ENCODE measurements at regions of chr22 and their contacts with region 1.

Region 1: DNA sequence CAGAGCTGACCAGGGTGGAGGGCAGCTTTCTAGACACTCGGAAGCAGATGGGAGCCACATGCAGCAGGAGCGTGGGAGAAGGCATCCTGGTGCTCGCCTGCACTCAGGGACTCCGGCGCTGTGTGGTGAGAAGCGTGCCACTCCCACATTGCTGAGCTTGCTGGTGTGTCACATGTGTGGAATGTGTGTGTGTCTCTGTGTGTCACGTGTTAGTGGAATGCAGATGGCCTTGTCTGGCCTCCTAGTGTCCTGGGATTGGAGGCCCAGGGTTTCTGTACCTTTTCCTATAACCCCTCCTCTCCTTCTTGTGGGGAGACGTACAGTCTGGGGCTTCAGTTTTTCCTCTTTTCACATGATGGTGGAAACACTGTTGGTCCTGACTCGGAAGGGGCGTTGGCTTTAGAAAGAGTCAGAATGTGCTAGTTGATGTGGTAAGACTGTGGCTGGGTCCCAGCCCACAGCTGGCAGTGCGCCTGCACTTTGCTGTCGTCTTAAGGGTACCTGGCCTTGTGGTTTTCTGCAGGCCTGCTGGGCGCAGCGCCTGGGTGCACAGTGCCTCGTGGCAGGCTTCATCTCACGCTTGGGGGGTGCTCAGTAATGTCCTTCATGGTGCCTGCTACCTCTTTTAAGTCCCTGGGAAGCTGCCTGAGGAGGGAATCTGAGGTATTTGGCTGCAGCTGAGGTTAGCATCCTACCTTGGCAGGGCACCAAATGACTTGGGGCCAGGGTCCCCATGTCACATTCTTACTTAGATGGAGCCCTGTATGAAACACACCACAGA is 61.8 kb downstream of the MED15 start:
- DNase-seq: peak; percentile 73 to 96 (median 88)
- ATAC-seq: peak; percentile 62
- H3K4me3 ChIP-seq: peak overlapping the region; percentile 12 to 30
- H3K4me3 Mint-ChIP-seq: peak overlapping the region; percentile 82
- H3K27ac ChIP-seq: peak overlapping the region; percentile 54 to 75
- H3K27ac Mint-ChIP-seq: peak overlapping the region; percentile 96
- H3K4me1 ChIP-seq: peaks cover 81% of the 10 kb centered on the region
- H3K4me1 Mint-ChIP-seq: peaks cover 80% of the 10 kb centered on the region
- H3K27me3 ChIP-seq: no peaks in the 10 kb centered on the region
- H3K27me3 Mint-ChIP-seq: no peaks in the 10 kb centered on the region
- CTCF ChIP-seq: no peak

Region 2: GRCh38 chr22:20319745-20320658 is 249.2 kb before region 1 on chr22 and contains the start of gene DGCR6L:
- CTCF ChIA-PET with region 1: no interaction called
- POLR2A ChIA-PET with region 1: interaction called, 3 read pairs
- intact Hi-C with region 1: loop called in 1 of 2 experiments (anchors 5 kb)
- DNase-seq: peak; percentile 91 to 99 (median 97)
- ATAC-seq: peak; percentile 76
- H3K4me3 ChIP-seq: peak within 1 kb of the TSS; percentile 88 to 97
- H3K4me3 Mint-ChIP-seq: peak within 1 kb of the TSS; percentile 90
- H3K27ac ChIP-seq: peak within 1 kb of the TSS; percentile 69 to 70
- H3K27ac Mint-ChIP-seq: peak within 1 kb of the TSS; percentile 89
- H3K4me1 ChIP-seq: peaks cover 51% of the 10 kb centered on the region
- H3K4me1 Mint-ChIP-seq: peaks cover 62% of the 10 kb centered on the region
- H3K27me3 ChIP-seq: no peaks in the 10 kb centered on the region
- H3K27me3 Mint-ChIP-seq: no peaks in the 10 kb centered on the region
- CTCF ChIP-seq: no peak
- total RNA-seq, gene DGCR6L: 29.8 to 32.9 TPM

Region 3: GRCh38 chr22:20456064-20456721 is 113.0 kb before region 1 on chr22:
- CTCF ChIA-PET with region 1: interaction called, 10 read pairs
- POLR2A ChIA-PET with region 1: no interaction called
- intact Hi-C with region 1: loop called in 1 of 2 experiments (anchors 5 kb)
- DNase-seq: peak; percentile 48 to 90 (median 75)
- ATAC-seq: peak; percentile 100
- H3K4me3 ChIP-seq: no peak overlapping the region
- H3K4me3 Mint-ChIP-seq: no peak overlapping the region
- H3K27ac ChIP-seq: no peak overlapping the region
- H3K27ac Mint-ChIP-seq: peak overlapping the region; percentile 4
- H3K4me1 ChIP-seq: peaks cover 16% of the 10 kb centered on the region
- H3K4me1 Mint-ChIP-seq: peaks cover 34% of the 10 kb centered on the region
- H3K27me3 ChIP-seq: no peaks in the 10 kb centered on the region
- H3K27me3 Mint-ChIP-seq: no peaks in the 10 kb centered on the region
- CTCF ChIP-seq: peak; percentile 87

Region 4: DNA sequence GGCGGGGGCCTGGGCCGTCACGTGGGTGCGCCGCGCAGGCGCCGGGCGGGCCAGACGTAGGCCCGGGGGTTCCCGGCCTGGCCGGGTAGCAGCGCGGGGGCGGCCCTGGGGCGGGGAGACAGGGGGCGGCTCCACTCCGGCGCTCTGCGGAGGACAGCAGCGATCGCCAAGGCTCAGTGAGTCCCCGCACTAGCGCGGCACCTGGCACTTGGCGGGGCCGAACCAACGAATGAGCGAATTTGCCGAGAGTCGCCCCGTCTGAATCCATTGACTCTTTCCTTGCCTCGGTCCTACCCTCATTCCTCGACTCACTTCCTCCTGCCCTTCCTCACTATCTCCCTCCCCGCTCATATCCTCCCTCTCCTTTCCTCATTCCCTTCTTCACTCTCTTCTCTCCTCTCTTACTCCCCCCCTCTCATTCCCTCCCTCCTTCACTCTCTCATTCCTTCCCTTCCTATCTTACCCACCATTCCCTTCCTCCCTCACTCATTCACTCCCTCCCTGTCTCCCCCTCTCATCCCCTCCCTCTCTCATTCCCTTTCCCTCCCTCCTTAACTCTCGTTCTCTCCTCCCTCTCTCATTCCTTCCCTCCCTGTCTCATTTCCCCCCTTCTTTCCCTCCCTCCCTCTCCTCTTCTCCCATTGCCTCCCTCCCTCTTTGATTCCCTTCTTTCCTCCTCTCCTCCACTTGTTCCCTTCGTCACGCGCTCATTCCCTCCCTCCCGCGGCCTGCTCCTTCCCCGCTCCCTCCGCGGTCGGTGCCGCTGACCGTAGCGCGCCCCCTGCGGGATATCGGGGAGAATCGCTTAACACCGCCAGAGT is 73.1 kb before region 1 on chr22:
- CTCF ChIA-PET with region 1: interaction called, 4 read pairs
- POLR2A ChIA-PET with region 1: interaction called, 10 read pairs
- intact Hi-C with region 1: loop called in 1 of 2 experiments (anchors 1 kb)
- DNase-seq: peak; percentile 83 to 96 (median 91)
- ATAC-seq: peak; percentile 96
- H3K4me3 ChIP-seq: peak overlapping the region; percentile 75 to 83
- H3K4me3 Mint-ChIP-seq: peak overlapping the region; percentile 89
- H3K27ac ChIP-seq: peak overlapping the region; percentile 61 to 98
- H3K27ac Mint-ChIP-seq: peak overlapping the region; percentile 91
- H3K4me1 ChIP-seq: peaks cover 42% of the 10 kb centered on the region
- H3K4me1 Mint-ChIP-seq: peaks cover 41% of the 10 kb centered on the region
- H3K27me3 ChIP-seq: no peaks in the 10 kb centered on the region
- H3K27me3 Mint-ChIP-seq: no peaks in the 10 kb centered on the region
- CTCF ChIP-seq: peak; percentile 95

Region 5: GRCh38 chr22:20531315-20532201 is 37.6 kb before region 1 on chr22:
- CTCF ChIA-PET with region 1: interaction called, 24 read pairs
- POLR2A ChIA-PET with region 1: interaction called, 5 read pairs
- intact Hi-C with region 1: no loop called
- DNase-seq: peak in 1 of 9 experiments; percentile 8
- ATAC-seq: peak; percentile 34
- H3K4me3 ChIP-seq: no peak overlapping the region
- H3K4me3 Mint-ChIP-seq: peak overlapping the region; percentile 4
- H3K27ac ChIP-seq: peak overlapping the region in 1 of 2 experiments; percentile 46
- H3K27ac Mint-ChIP-seq: peak overlapping the region; percentile 90
- H3K4me1 ChIP-seq: peaks cover 49% of the 10 kb centered on the region
- H3K4me1 Mint-ChIP-seq: peaks cover 76% of the 10 kb centered on the region
- H3K27me3 ChIP-seq: no peaks in the 10 kb centered on the region
- H3K27me3 Mint-ChIP-seq: no peaks in the 10 kb centered on the region
- CTCF ChIP-seq: no peak

Region 6: DNA sequence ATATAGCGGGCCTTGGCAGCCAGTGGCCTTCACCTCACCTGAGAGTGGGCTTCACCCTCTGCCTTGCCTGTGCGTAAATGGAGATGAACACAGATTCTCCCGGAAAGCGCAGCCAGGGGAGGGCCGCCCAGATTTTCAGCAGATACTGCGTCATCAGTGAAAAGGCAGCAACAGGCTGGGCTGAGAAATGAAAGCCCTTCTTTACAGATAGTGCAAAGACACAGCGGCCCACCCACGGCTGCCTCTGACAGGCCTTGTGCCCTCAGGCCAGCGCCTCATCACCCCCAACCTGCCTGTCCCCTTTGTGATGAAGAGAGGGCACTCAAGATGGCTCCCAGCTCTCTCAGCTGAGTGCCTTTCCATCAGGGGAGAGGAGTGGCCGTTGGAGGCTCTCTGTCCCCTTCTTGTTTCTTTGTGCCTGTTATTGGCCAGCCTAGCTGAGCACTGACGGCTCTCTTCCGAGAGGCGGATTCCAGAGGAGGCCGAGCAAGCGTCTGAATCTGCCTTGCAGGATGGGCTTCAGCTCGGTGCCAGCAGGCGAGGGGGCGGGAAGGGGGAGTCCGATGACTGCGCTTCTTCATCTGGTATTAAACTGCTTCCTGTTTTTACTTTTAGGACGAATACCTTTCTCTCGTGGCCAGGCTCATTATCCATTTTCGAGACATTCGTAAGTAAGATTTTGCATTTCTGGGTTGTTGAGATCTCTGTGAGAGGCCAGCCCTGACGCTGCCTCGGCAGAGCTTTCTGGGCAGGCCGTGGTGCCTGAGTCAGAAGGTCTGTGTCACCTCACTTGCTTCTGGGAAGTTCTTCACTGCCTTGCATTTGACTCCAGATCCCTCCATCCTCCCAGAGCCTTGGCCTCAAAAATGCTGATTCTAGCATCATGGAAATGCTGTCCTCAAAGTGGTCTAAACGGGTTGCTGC is 18.1 kb before region 1 on chr22:
- CTCF ChIA-PET with region 1: interaction called, 382 read pairs
- POLR2A ChIA-PET with region 1: interaction called, 308 read pairs
- intact Hi-C with region 1: loop called (anchors 2 kb)
- DNase-seq: peak; percentile 41 to 87 (median 68)
- ATAC-seq: peak; percentile 61
- H3K4me3 ChIP-seq: peak overlapping the region; percentile 18 to 46
- H3K4me3 Mint-ChIP-seq: peak overlapping the region; percentile 89
- H3K27ac ChIP-seq: peak overlapping the region; percentile 86 to 87
- H3K27ac Mint-ChIP-seq: peak overlapping the region; percentile 97
- H3K4me1 ChIP-seq: peaks cover 92% of the 10 kb centered on the region
- H3K4me1 Mint-ChIP-seq: peaks cover 90% of the 10 kb centered on the region
- H3K27me3 ChIP-seq: no peaks in the 10 kb centered on the region
- H3K27me3 Mint-ChIP-seq: no peaks in the 10 kb centered on the region
- CTCF ChIP-seq: no peak

Region 7: DNA sequence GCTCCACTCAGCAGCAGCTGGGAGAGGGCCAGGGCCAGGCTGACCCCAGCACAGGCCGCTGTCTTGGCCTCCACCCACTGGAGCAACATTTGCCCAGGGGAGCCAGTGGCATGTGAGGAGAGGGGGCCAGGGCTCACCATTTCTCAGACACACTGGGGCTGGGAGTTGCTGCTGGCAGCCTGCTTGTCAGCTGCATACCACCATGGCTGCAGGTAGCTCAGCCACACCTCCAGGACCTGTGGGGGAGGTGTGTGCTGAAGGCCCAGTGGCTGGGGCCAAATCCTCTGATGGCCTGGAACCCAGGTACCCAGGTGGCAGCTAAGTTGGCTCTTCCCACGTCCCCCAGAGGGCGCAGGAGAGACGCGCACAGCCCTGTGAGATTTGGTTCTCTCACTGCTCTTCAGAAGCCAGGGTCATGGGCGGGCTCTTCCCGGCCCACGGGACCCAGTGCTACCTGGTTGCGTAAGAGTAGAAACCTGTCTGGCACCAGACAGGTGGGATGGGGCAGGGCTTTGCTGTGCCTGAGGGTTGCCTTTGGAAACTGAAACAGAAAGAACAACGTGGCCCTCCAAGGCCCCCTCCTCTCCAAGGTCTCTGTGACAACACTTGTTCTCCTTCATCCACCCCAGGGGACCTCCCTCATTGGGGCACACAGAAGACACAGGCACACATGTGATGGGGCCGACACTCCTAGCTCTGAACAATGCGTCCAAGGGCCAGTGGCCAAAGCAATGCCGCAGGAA is 37.0 kb after region 1 on chr22:
- CTCF ChIA-PET with region 1: interaction called, 6 read pairs
- POLR2A ChIA-PET with region 1: interaction called, 3 read pairs
- intact Hi-C with region 1: loop called in 1 of 2 experiments (anchors 5 kb)
- DNase-seq: peak; percentile 38 to 85 (median 72)
- ATAC-seq: peak; percentile 96
- H3K4me3 ChIP-seq: no peak overlapping the region
- H3K4me3 Mint-ChIP-seq: no peak overlapping the region
- H3K27ac ChIP-seq: no peak overlapping the region
- H3K27ac Mint-ChIP-seq: no peak overlapping the region
- H3K4me1 ChIP-seq: peaks cover 7% of the 10 kb centered on the region
- H3K4me1 Mint-ChIP-seq: peaks cover 14% of the 10 kb centered on the region
- H3K27me3 ChIP-seq: no peaks in the 10 kb centered on the region
- H3K27me3 Mint-ChIP-seq: no peaks in the 10 kb centered on the region
- CTCF ChIP-seq: peak; percentile 71

Region 8: DNA sequence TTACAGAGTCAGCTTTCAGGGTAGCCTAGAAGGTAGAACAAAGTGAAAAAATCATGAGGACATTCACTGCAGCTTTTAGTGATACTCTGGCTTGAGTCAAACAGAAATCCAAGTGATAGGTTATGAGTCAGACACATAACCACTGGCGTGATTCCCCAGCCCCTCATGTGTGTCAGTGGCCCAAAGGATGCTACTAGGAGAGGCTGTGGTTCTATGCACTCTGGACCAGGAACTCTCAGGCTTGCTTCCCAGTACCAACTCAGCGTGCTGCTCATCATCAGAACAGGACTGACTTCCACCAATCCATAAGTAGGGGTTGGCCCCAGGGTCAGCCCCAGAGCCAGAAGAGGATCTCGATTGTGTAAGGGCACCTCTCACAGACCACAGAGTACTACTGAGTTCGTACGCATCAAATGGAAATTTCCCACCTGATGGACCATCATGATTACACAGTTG is 55.0 kb after region 1 on chr22:
- CTCF ChIA-PET with region 1: no interaction called
- POLR2A ChIA-PET with region 1: no interaction called
- intact Hi-C with region 1: no loop called
- DNase-seq: no peak
- ATAC-seq: no peak
- H3K4me3 ChIP-seq: no peak overlapping the region
- H3K4me3 Mint-ChIP-seq: no peak overlapping the region
- H3K27ac ChIP-seq: no peak overlapping the region
- H3K27ac Mint-ChIP-seq: no peak overlapping the region
- H3K4me1 ChIP-seq: no peaks in the 10 kb centered on the region
- H3K4me1 Mint-ChIP-seq: no peaks in the 10 kb centered on the region
- H3K27me3 ChIP-seq: no peaks in the 10 kb centered on the region
- H3K27me3 Mint-ChIP-seq: no peaks in the 10 kb centered on the region
- CTCF ChIP-seq: no peak

Region 9: GRCh38 chr22:20840646-20841371 is 271.6 kb after region 1 on chr22:
- CTCF ChIA-PET with region 1: no interaction called
- POLR2A ChIA-PET with region 1: no interaction called
- intact Hi-C with region 1: no loop called
- DNase-seq: peak in 1 of 9 experiments; percentile 18
- ATAC-seq: no peak
- H3K4me3 ChIP-seq: no peak overlapping the region
- H3K4me3 Mint-ChIP-seq: no peak overlapping the region
- H3K27ac ChIP-seq: peak overlapping the region in 1 of 2 experiments; percentile 14
- H3K27ac Mint-ChIP-seq: peak overlapping the region; percentile 77
- H3K4me1 ChIP-seq: peaks cover 31% of the 10 kb centered on the region
- H3K4me1 Mint-ChIP-seq: peaks cover 68% of the 10 kb centered on the region
- H3K27me3 ChIP-seq: no peaks in the 10 kb centered on the region
- H3K27me3 Mint-ChIP-seq: no peaks in the 10 kb centered on the region
- CTCF ChIP-seq: no peak

Measured in CD8-positive, alpha-beta T cell (primary cell).